PC-3 (cell line): ENCODE measurements at regions of chr10 and their contacts with region 1.

Region 1: GRCh38 chr10:37263341-37263740 is 137.9 kb downstream of the ANKRD30A start:
- DNase-seq: peak; percentile 83
- ATAC-seq: peak; percentile 75
- H3K4me3 ChIP-seq: no peak overlapping the region
- H3K27ac ChIP-seq: no peak overlapping the region
- H3K4me1 ChIP-seq: no peaks in the 10 kb centered on the region; the same call in 1 of the 2 replicates
- H3K27me3 ChIP-seq: peaks cover 5% of the 10 kb centered on the region; the same call in 1 of the 2 replicates
- CTCF ChIP-seq: peak; percentile 95

Region 2: DNA sequence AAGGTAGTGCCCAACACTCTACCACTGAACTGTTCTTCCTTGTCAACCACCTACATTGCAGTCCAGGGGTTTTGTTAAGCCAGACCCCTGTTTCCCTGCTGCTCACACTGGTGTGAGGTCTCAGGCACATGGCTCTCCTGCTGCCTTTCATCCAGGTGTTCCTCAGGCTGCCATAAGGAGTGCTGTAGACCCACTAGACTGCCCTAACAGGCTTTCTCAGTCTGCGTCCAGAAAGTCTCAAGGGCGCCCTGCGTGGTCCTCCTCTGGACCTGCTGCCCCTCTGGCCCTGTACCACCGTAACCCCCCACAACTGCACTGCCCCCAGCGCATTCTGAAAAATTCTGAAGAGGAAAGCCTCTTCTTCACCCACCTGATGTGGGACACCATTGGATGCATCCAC is 363.7 kb before region 1 on chr10:
- CTCF ChIA-PET with region 1: interaction called, 9 read pairs
- POLR2A ChIA-PET with region 1: no interaction called
- intact Hi-C with region 1: loop called (anchors 1 kb)
- DNase-seq: peak; percentile 66
- ATAC-seq: peak; percentile 88
- H3K4me3 ChIP-seq: no peak overlapping the region
- H3K27ac ChIP-seq: no peak overlapping the region
- H3K4me1 ChIP-seq: peaks cover 3% of the 10 kb centered on the region; the same call in 1 of the 2 replicates
- H3K27me3 ChIP-seq: 0 out of 2 replicates have a peak, but pooled peaks cover 2% of the 10 kb centered on the region
- CTCF ChIP-seq: no peak

Region 3: DNA sequence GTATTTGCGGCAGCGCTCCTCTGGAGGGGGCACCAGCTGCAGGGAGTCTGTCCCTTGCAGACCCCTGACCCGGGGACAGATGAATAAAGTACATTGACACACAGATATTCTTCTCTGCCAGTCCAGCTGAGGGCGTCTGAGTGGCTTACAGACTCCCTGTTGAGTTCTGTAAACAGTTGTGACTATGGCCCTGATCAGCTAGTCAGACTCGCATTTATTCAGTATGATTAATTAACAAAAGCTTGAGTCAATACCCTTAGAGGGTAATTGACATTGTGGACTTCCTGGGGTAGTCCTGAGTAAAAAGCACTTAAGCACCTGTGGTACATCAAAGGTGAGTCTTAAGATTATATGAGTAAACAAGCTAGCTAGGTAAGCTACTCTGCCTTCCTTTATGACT is 116.9 kb before region 1 on chr10:
- CTCF ChIA-PET with region 1: interaction called, 4 read pairs
- POLR2A ChIA-PET with region 1: no interaction called
- intact Hi-C with region 1: loop called (anchors 1 kb)
- DNase-seq: peak; percentile 86
- ATAC-seq: peak; percentile 86
- H3K4me3 ChIP-seq: no peak overlapping the region
- H3K27ac ChIP-seq: no peak overlapping the region
- H3K4me1 ChIP-seq: peaks cover 11% of the 10 kb centered on the region; the same call in 1 of the 2 replicates
- H3K27me3 ChIP-seq: peaks cover 14% of the 10 kb centered on the region; the same call in 1 of the 2 replicates
- CTCF ChIP-seq: peak; percentile 82

Region 4: GRCh38 chr10:37619336-37619735 is 356.0 kb after region 1 on chr10:
- CTCF ChIA-PET with region 1: no interaction called
- POLR2A ChIA-PET with region 1: no interaction called
- intact Hi-C with region 1: no loop called
- DNase-seq: peak; percentile 49
- ATAC-seq: peak; percentile 79
- H3K4me3 ChIP-seq: no peak overlapping the region
- H3K27ac ChIP-seq: no peak overlapping the region
- H3K4me1 ChIP-seq: no peaks in the 10 kb centered on the region
- H3K27me3 ChIP-seq: no peaks in the 10 kb centered on the region
- CTCF ChIP-seq: no peak